Activated naive CD4-positive, alpha-beta T cell treated with anti-CD3 and anti-CD28 coated beads for 36 hours (primary cell): ENCODE measurements at regions of chr10 and their contacts with region 1.

Region 1: GRCh38 chr10:8254350-8254749 is 199.9 kb downstream of the GATA3 start:
- DNase-seq: peak; percentile 40
- H3K4me3 Mint-ChIP-seq: no peak overlapping the region
- H3K27ac Mint-ChIP-seq: peak overlapping the region; percentile 73
- H3K4me1 Mint-ChIP-seq: peaks cover 23% of the 10 kb centered on the region
- H3K27me3 Mint-ChIP-seq: no peaks in the 10 kb centered on the region

Region 2: DNA sequence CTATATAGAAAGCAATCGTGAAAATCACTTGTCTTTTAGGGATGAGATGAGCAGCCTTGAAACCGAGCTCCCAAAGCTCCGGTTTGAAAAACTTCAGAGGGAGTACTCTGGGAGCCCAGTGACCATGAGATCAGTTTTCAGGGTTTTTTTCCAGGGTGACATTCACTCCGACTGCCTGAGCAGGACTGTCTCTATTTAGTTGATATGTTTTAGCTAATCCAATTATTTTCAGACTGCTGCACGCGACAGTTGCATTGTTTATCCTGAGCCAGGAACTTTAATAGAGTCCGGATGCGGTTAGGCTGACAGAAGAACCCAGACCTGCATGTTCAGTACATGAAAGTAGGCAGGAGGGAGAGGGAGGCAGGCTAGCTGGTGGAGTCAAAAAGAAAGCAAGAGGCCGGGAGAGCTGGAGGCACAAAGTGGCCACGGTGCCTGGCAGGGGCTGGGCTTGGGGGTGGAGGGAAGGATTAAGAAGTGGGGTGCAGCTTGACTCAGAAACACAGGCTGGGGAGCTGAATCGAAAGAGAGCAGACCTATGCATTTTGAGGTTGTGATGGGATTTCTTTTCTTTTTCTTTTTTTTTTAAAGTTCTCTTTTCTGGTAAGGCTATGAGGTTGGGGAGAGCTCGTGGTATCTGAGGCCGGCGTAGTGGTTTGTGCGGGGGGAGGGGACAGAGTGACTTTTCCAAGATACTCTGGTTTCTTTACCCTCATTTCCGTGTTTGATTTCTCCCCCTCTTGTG is 194.2 kb before region 1 on chr10:
- CTCF ChIA-PET with region 1: no interaction called
- intact Hi-C with region 1: loop called (anchors 2 kb)
- DNase-seq: peak; percentile 75
- H3K4me3 Mint-ChIP-seq: peak overlapping the region; percentile 54
- H3K27ac Mint-ChIP-seq: peak overlapping the region; percentile 62
- H3K4me1 Mint-ChIP-seq: peaks cover 81% of the 10 kb centered on the region
- H3K27me3 Mint-ChIP-seq: no peaks in the 10 kb centered on the region

Region 3: GRCh38 chr10:8065651-8066050 is 188.7 kb before region 1 on chr10:
- CTCF ChIA-PET with region 1: no interaction called
- intact Hi-C with region 1: loop called (anchors 1 kb)
- DNase-seq: no peak
- H3K4me3 Mint-ChIP-seq: no peak overlapping the region
- H3K27ac Mint-ChIP-seq: peak overlapping the region; percentile 78
- H3K4me1 Mint-ChIP-seq: peaks cover 88% of the 10 kb centered on the region
- H3K27me3 Mint-ChIP-seq: no peaks in the 10 kb centered on the region

Region 4: GRCh38 chr10:8331883-8332729 is 77.8 kb after region 1 on chr10:
- CTCF ChIA-PET with region 1: no interaction called
- intact Hi-C with region 1: loop called (anchors 5 kb)
- DNase-seq: peak; percentile 80
- H3K4me3 Mint-ChIP-seq: peak overlapping the region; percentile 75
- H3K27ac Mint-ChIP-seq: no peak overlapping the region
- H3K4me1 Mint-ChIP-seq: peaks cover 20% of the 10 kb centered on the region
- H3K27me3 Mint-ChIP-seq: peaks cover 13% of the 10 kb centered on the region

Region 5: DNA sequence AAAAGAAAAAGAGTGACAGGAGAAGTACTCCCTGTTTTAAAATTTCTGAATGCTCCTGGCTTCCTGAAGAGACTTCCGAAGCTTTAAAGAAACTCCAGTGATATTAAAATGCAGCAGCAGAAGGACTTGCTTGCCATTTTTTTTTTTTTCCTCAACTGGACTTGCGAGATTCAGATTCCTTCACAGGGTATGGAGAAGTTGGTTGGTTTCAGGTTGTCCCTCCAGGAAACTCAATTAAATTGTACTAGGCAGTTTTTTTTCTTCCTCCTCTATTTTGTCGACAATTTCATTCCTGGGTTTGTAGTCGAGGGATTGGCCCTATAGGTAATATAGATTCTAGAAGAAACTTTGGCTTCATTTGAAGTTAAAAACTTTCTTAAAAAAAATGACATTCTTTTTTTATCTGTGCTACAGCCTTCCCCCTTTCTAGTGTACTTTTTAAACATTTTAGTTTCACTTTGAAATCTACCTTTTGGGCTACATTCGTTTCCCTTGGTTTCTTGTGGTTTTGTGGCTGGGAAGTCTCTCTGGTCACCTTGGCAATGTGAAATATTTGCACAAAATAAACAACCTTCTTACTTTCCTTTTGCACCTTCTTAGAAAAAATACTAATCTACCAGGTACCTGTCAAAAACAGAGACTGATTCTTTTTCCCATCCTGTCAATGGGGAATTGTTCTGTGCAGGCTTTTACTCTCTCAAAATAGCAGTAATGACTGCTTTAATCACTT is 150.2 kb after region 1 on chr10:
- CTCF ChIA-PET with region 1: no interaction called
- intact Hi-C with region 1: loop called (anchors 2 kb)
- DNase-seq: peak; percentile 53
- H3K4me3 Mint-ChIP-seq: peak overlapping the region; percentile 4
- H3K27ac Mint-ChIP-seq: no peak overlapping the region
- H3K4me1 Mint-ChIP-seq: peaks cover 58% of the 10 kb centered on the region
- H3K27me3 Mint-ChIP-seq: no peaks in the 10 kb centered on the region